Lower lobe of right lung (tissue), 2 donors: ENCODE measurements at regions of chr16 and their contacts with region 1.

Region 1: GRCh38 chr16:66020642-66021041 is 345.8 kb upstream of the CDH5 start:
- DNase-seq: no peak
- ATAC-seq: no peak
- H3K4me3 ChIP-seq: no peak overlapping the region
- H3K27ac ChIP-seq: no peak overlapping the region
- H3K4me1 ChIP-seq: no peaks in the 10 kb centered on the region
- H3K27me3 ChIP-seq: no peaks in the 10 kb centered on the region
- CTCF ChIP-seq: no peak

Region 2: GRCh38 chr16:65675161-65675560 is 345.5 kb before region 1 on chr16:
- intact Hi-C with region 1: loop called (anchors 5 kb)
- DNase-seq: no peak
- ATAC-seq: no peak
- H3K4me3 ChIP-seq: no peak overlapping the region
- H3K27ac ChIP-seq: no peak overlapping the region
- H3K4me1 ChIP-seq: no peaks in the 10 kb centered on the region
- H3K27me3 ChIP-seq: no peaks in the 10 kb centered on the region
- CTCF ChIP-seq: no peak